Activated T-helper 1 cell treated with anti-CD3 and anti-CD28 coated beads, Interleukin-12 subunit alpha, Interleukin-12 subunit beta, Interleukin-2, Interleukin-4 antibody, amounts not matched to agents 30 ng/mL and 10 ng/mL and 1 ng/mL, durations not matched to agents 14 hours and 24 hours and 36 hours (primary cell): ENCODE measurements at regions of chr14 and their contacts with region 1.

Region 1: GRCh38 chr14:53109105-53110041 is 43.8 kb downstream of the DDHD1 start:
- DNase-seq: peak; percentile 66
- H3K4me3 Mint-ChIP-seq: no peak overlapping the region
- H3K27ac Mint-ChIP-seq: no peak overlapping the region
- H3K4me1 Mint-ChIP-seq: peaks cover 33% of the 10 kb centered on the region
- H3K27me3 Mint-ChIP-seq: no peaks in the 10 kb centered on the region

Region 2: GRCh38 chr14:52918486-52918885 is 190.9 kb before region 1 on chr14:
- intact Hi-C with region 1: loop called (anchors 2 kb)
- DNase-seq: peak; percentile 33
- H3K4me3 Mint-ChIP-seq: no peak overlapping the region
- H3K27ac Mint-ChIP-seq: peak overlapping the region; percentile 50
- H3K4me1 Mint-ChIP-seq: peaks cover 36% of the 10 kb centered on the region
- H3K27me3 Mint-ChIP-seq: no peaks in the 10 kb centered on the region

Region 3: GRCh38 chr14:53126731-53127130 is 17.4 kb after region 1 on chr14:
- intact Hi-C with region 1: loop called (anchors 1 kb)
- DNase-seq: no peak
- H3K4me3 Mint-ChIP-seq: peak overlapping the region; percentile 41
- H3K27ac Mint-ChIP-seq: peak overlapping the region; percentile 72
- H3K4me1 Mint-ChIP-seq: peaks cover 30% of the 10 kb centered on the region
- H3K27me3 Mint-ChIP-seq: no peaks in the 10 kb centered on the region

Region 4: GRCh38 chr14:53180268-53181221 is 71.2 kb after region 1 on chr14:
- intact Hi-C with region 1: loop called (anchors 1 kb)
- DNase-seq: peak; percentile 65
- H3K4me3 Mint-ChIP-seq: peak overlapping the region; percentile 45
- H3K27ac Mint-ChIP-seq: peak overlapping the region; percentile 67
- H3K4me1 Mint-ChIP-seq: peaks cover 58% of the 10 kb centered on the region
- H3K27me3 Mint-ChIP-seq: peaks cover 4% of the 10 kb centered on the region

Region 5: GRCh38 chr14:54396493-54397335 is 1287.3 kb after region 1 on chr14 and contains the start of gene CDKN3:
- intact Hi-C with region 1: loop called (anchors 5 kb)
- DNase-seq: peak; percentile 98
- H3K4me3 Mint-ChIP-seq: peak within 1 kb of the TSS; percentile 81
- H3K27ac Mint-ChIP-seq: peak within 1 kb of the TSS; percentile 85
- H3K4me1 Mint-ChIP-seq: peaks cover 16% of the 10 kb centered on the region
- H3K27me3 Mint-ChIP-seq: peaks cover 3% of the 10 kb centered on the region
- total RNA-seq, gene CDKN3: 36.5 and 39.2 TPM in 2 replicates